PC-9 (cell line): ENCODE measurements at regions of chr17 and their contacts with region 1.

Region 1: GRCh38 chr17:6555331-6556120 is 829 bp downstream of the PITPNM3 start:
- DNase-seq: peak; percentile 50 to 53
- H3K4me3 ChIP-seq: peak overlapping the region; percentile 69
- H3K27ac ChIP-seq: no peak overlapping the region
- H3K4me1 ChIP-seq: peaks cover 56% of the 10 kb centered on the region
- H3K27me3 ChIP-seq: no peaks in the 10 kb centered on the region
- CTCF ChIP-seq: no peak

Region 2: DNA sequence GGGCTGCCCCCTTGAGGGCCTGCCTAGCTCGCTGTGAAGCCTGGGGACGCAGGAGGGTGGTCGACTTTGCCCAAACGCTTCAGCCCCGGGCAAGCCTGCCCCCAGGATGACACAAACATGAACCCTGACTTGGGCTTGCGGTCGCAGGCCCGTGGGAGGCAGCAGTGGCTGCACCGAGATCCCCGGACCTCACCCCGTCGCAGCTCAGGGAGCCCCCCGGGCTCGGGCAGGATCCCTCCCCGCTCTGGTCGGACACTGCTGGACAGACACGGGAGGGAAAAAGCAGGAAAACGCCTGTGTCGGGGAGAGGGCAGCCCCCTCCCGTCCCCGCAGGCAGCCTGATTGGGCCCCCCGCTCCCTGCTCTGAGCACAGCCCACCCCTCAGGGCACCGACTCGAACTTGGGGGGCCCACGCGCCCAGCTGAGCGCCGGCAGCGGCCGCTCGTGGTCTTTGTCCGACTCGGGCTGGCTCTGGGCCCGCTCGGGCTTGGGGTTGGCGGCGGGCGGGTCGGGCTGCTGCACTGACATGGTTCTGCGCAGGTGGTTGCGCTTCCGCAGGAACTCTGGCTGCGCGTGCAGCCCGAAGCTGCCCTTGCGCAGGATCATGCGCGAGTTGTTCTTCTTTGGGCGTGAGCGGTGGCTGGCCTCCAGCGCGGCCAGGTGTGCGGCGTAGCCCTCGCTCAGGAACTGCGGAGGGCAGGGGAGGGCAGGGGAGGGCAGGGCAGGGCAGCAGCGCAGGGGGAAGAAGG is 100.4 kb before region 1 on chr17:
- CTCF ChIA-PET with region 1: no interaction called
- POLR2A ChIA-PET with region 1: no interaction called
- intact Hi-C with region 1: loop called (anchors 1 kb)
- DNase-seq: no peak
- H3K4me3 ChIP-seq: no peak overlapping the region
- H3K27ac ChIP-seq: no peak overlapping the region
- H3K4me1 ChIP-seq: peaks cover 12% of the 10 kb centered on the region
- H3K27me3 ChIP-seq: no peaks in the 10 kb centered on the region
- CTCF ChIP-seq: no peak

Region 3: GRCh38 chr17:6494239-6494941 is 61.1 kb before region 1 on chr17:
- CTCF ChIA-PET with region 1: interaction called, 3 read pairs
- POLR2A ChIA-PET with region 1: no interaction called
- intact Hi-C with region 1: loop called (anchors 1 kb)
- DNase-seq: peak; percentile 77 to 85
- H3K4me3 ChIP-seq: no peak overlapping the region
- H3K27ac ChIP-seq: no peak overlapping the region
- H3K4me1 ChIP-seq: peaks cover 11% of the 10 kb centered on the region
- H3K27me3 ChIP-seq: no peaks in the 10 kb centered on the region
- CTCF ChIP-seq: no peak

Region 4: GRCh38 chr17:6523330-6523729 is 32.2 kb before region 1 on chr17:
- CTCF ChIA-PET with region 1: interaction called, 22 read pairs
- POLR2A ChIA-PET with region 1: interaction called, 4 read pairs
- intact Hi-C with region 1: loop called (anchors 1 kb)
- DNase-seq: peak; percentile 85 to 91
- H3K4me3 ChIP-seq: no peak overlapping the region
- H3K27ac ChIP-seq: peak overlapping the region; percentile 74
- H3K4me1 ChIP-seq: peaks cover 41% of the 10 kb centered on the region
- H3K27me3 ChIP-seq: no peaks in the 10 kb centered on the region
- CTCF ChIP-seq: no peak

Region 5: DNA sequence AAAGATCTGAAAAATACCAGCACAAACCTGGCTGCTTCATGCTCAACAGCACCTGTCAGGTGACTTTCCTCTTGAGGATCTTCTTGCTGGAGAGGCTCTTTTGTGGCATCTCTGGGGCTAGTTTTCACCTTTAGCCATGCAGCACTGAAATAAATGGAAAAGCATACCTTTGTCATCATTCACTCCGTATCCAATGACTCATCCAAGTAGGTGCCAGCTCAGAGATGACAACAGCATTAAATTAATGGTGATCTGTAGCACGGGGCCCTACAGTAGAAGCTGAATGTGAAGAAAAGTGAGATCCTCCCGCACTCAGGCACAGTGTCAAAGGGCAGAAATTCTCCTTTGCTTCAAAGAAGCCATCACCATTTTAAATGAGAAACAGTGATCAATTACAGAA is 52.8 kb after region 1 on chr17:
- CTCF ChIA-PET with region 1: no interaction called
- POLR2A ChIA-PET with region 1: no interaction called
- intact Hi-C with region 1: loop called (anchors 2 kb)
- DNase-seq: peak; percentile 53 to 83
- H3K4me3 ChIP-seq: no peak overlapping the region
- H3K27ac ChIP-seq: peak overlapping the region; percentile 66
- H3K4me1 ChIP-seq: peaks cover 16% of the 10 kb centered on the region
- H3K27me3 ChIP-seq: no peaks in the 10 kb centered on the region
- CTCF ChIP-seq: no peak